Activated CD4-positive, alpha-beta memory T cell treated with anti-CD3 and anti-CD28 coated beads for 36 hours (primary cell): ENCODE measurements at regions of chr12 and their contacts with region 1.

Region 1: GRCh38 chr12:89261982-89262381 is 90.3 kb downstream of the DUSP6 start:
- DNase-seq: no peak
- H3K4me3 Mint-ChIP-seq: no peak overlapping the region
- H3K27ac Mint-ChIP-seq: no peak overlapping the region
- H3K4me1 Mint-ChIP-seq: peaks cover 15% of the 10 kb centered on the region
- H3K27me3 Mint-ChIP-seq: no peaks in the 10 kb centered on the region

Region 2: GRCh38 chr12:89289720-89290119 is 27.7 kb after region 1 on chr12:
- CTCF ChIA-PET with region 1: interaction called, 6 read pairs
- POLR2A ChIA-PET with region 1: no interaction called
- intact Hi-C with region 1: loop called (anchors 5 kb)
- DNase-seq: no peak
- H3K4me3 Mint-ChIP-seq: no peak overlapping the region
- H3K27ac Mint-ChIP-seq: no peak overlapping the region
- H3K4me1 Mint-ChIP-seq: peaks cover 4% of the 10 kb centered on the region
- H3K27me3 Mint-ChIP-seq: no peaks in the 10 kb centered on the region